ENCODE measurements at regions of chr4 and their contacts with region 1.

Region 1: DNA sequence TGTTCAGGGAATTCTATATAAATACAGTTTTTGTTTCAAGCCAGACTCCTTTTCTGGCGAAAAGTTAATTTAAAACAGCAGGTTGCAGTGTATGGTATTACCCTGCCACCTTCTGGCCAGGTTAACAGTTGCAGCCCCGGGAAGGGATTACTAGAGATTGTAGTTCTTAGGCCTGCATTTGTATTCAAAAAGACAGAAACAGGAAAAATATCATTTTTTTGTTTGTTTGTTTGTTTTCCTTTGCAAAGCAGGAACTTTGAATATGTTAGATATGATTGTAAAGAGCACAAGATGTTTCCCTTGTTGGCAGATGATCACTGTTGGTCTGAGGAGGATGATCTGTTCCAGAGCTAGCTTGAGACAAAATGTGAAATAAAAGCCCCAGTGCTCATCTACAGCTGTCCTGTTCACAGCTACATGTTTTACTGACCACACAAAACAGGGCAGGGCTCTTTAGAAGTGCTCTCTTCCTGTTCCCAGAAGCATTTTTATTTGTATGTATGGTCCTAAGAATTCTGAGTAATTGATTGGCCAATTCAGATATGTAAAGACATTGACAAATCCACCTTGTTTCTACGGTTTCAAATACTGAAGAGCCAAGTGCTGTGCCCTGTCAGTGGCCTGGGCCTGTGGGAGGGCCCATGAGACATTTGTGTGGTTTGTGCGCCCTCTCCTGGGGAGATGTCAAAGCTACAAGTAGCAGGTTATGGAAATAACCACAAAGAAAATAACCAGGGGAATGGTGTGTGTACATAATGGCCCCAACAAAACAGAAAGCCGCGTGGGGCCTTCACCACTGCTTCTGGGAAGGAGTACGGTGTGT is 57.9 kb downstream of the CLDN22 start:
- DNase-seq: peak; percentile 6
- H3K4me3 ChIP-seq: no peak overlapping the region
- H3K27ac ChIP-seq: peak overlapping the region in 3 of 4 donors; percentile 23 to 45 (median 33)
- H3K4me1 ChIP-seq: peaks cover 0 to 12% (median 5%) of the 10 kb centered on the region in 3 donors
- H3K27me3 ChIP-seq: no peaks in the 10 kb centered on the region
- CTCF ChIP-seq: peak; percentile 54 to 92 (median 81)
- POLR2A ChIP-seq: no peak

Region 2: DNA sequence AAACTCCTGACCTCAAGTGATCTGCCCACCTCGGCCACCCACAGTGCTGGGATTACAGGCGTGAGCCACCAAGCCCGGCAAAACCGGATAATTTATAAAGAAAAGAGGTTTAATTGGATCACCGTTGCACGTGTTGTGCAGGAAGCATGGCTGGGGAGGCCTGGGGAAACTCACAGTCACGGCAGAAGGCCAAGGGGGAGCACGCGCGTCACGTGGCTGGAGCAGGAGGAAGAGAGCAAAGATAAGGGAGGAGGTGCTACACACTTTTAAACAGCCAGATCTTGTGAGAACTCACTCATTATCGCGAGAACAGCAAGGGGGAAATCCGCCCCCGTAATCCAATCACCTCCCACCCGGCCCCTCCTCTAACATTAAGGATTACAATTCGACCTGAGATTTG is 1196.9 kb before region 1 on chr4:
- intact Hi-C with region 1: no loop called
- DNase-seq: no peak
- H3K4me3 ChIP-seq: no peak overlapping the region
- H3K27ac ChIP-seq: no peak overlapping the region
- H3K4me1 ChIP-seq: peaks cover 0 to 8% (median 0%) of the 10 kb centered on the region in 3 donors
- H3K27me3 ChIP-seq: no peaks in the 10 kb centered on the region
- CTCF ChIP-seq: no peak
- POLR2A ChIP-seq: no peak

Region 3: DNA sequence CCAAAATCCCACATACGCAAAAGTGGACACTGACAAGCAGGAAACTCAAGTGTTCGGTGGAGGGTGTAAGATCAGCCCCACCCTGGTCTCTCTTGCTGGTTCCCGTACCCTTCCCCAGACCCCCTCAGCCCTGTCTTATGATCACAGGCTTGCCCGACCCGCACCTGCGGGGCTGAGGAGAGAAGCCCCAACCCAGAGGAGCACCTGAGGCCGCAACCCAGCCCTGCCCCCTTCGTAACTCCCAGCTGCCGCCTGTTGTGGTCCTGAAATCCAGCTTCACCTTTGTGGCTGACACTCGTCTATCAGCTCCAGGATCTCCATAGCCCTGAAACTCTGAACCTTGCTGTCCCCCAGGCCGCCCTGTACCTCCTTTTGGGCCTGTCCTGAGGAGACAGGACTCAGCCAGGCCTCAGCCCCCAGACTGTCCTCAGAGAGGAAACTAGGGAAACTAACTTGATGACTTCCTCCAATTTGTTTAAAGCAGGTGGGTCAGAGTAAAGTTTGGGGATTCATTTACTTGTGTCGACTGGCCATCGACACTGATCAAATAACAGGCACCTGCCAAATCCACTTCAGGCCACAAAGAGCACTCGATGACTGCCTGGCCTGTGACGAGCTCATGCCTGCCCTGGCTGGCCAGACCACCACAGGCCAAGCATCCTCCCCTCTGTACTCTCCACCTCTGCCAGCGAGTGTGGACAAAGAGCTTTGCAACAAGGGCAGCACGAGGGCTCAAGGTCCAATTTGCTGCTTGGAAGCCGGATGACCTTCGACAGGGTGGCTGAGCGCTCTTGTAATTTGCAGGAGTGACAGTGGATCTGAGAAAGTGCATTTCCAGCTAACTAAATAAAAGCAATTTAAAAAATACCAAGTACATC is 364.3 kb before region 1 on chr4:
- intact Hi-C with region 1: no loop called
- DNase-seq: no peak
- H3K4me3 ChIP-seq: no peak overlapping the region
- H3K27ac ChIP-seq: no peak overlapping the region
- H3K4me1 ChIP-seq: no peaks in the 10 kb centered on the region
- H3K27me3 ChIP-seq: no peaks in the 10 kb centered on the region
- CTCF ChIP-seq: no peak
- POLR2A ChIP-seq: no peak

Region 4: GRCh38 chr4:183074296-183074990 is 187.7 kb before region 1 on chr4:
- intact Hi-C with region 1: loop called (anchors 5 kb)
- DNase-seq: no peak
- H3K4me3 ChIP-seq: no peak overlapping the region
- H3K27ac ChIP-seq: no peak overlapping the region
- H3K4me1 ChIP-seq: no peaks in the 10 kb centered on the region
- H3K27me3 ChIP-seq: no peaks in the 10 kb centered on the region
- CTCF ChIP-seq: no peak
- POLR2A ChIP-seq: no peak

Region 5: GRCh38 chr4:183398227-183399125 is 136.3 kb after region 1 on chr4:
- intact Hi-C with region 1: loop called (anchors 10 kb)
- DNase-seq: peak; percentile 3
- H3K4me3 ChIP-seq: peak overlapping the region; percentile 41 to 70 (median 51)
- H3K27ac ChIP-seq: peak overlapping the region; percentile 53 to 68 (median 64)
- H3K4me1 ChIP-seq: peaks cover 0 to 21% (median 8%) of the 10 kb centered on the region in 3 donors
- H3K27me3 ChIP-seq: no peaks in the 10 kb centered on the region
- CTCF ChIP-seq: peak; percentile 24 to 74 (median 55)
- POLR2A ChIP-seq: no peak

Measured in esophagus squamous epithelium (tissue), 5 donors.